Posterior cingulate gyrus (tissue), 11 donors: ENCODE measurements at regions of chr4 and their contacts with region 1.

Region 1: DNA sequence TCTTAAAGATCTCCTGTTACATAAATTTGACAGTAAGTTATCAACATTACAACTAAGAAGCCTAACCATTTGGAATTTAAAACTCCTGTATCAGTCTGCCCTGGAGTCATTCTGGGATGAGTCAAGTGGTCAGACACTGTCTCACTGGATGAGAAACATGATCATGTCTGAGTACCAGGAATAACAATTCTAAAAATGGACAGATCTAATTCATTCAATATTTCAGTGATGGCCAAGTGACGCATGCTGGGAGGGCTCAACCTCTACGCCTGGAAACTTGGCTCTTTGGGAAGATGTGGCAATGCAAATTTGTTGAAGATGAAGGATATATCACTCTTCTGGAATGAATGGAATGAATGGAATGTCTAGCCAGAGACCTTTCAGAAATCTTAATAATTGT is 1427.2 kb downstream of the STIM2 start:
- DNase-seq: no peak

Region 2: GRCh38 chr4:27775156-27775555 is 512.7 kb before region 1 on chr4:
- intact Hi-C with region 1: no loop called
- DNase-seq: no peak

Region 3: DNA sequence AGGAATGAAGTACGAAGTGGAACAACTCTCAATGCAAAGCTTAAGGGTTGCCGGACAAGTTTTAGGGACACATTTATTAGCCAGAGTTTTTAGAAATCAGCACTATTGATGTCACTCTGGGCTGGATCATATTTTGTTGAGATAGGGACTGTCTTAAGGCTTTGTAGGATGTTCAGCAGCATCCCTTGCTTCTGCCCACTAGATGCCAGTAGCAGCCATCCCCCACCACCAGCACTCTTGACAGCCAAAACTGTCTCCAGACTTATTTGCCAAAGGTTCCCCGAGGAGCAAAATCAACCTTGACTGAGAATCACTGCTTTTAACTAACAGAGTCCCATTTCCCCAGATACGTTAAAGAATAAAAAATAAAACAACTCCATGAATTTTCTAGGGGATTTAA is 70.2 kb after region 1 on chr4:
- intact Hi-C with region 1: loop called (anchors 10 kb)
- DNase-seq: peak in 6 of 10 donors; percentile 4 to 83 (median 17)

Region 4: DNA sequence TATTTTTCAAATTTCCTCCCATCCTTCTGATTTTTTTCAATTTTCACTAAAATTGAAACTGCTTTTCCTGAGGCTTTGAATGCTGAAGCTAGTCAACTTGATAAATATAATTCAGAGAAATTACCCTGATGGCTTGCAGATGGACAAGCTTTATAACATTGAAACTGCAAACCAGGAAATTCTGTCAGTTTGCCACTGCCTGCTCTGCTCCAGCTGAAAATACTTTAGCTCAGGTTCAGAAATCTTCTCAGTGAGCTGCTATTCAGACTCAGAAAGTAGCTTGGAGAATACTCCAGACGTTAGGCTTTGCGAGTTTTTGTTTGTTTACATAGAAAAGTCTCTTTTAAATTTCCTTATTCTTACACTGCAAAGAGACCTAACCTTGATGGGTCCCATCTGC is 147.5 kb after region 1 on chr4:
- intact Hi-C with region 1: no loop called
- DNase-seq: no peak